ENCODE measurements at regions of chr17 and their contacts with region 1.

Region 1: DNA sequence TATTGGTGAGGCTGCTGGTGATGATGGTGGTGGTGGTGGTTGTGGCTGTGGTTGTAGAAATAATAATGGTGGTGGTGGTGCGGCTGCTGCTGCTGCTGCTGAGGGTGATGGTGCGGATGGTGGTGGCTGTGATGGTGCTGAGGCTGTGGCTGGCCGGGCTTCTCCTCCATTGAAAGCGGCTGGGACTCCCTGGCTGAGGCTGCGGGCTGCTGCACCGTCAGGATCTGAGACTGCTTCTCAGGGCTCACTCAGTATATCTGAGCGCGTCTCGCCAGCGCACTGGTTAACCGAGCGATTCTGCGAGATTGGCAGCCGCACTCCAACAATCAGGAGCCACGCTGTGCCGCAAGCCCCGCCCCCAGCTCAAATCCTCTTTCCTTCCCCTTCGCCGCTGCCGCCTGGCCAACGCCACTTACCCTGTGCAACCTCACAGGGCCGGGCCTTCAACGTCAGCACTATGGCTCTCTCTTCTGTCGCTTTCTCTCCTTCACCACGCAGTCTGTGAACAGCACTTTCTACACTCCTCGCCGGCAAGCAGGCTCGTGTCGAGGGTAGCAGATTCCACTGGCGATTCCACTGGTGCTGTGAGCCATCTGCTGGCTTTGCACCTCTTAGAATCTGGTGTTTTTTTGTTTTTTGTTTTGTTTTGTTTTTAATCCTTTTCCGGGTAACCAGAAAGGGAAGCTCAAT is at the start of gene NUFIP2:
- DNase-seq: peak; percentile 98 to 99 (median 99)
- ATAC-seq: peak; percentile 94
- H3K4me3 ChIP-seq: peak within 1 kb of the TSS; percentile 92 to 94
- H3K27ac ChIP-seq: peak within 1 kb of the TSS; percentile 96 to 99
- H3K4me1 ChIP-seq: peaks cover 21 to 39% of the 10 kb centered on the region in 2 donors
- H3K27me3 ChIP-seq: no peaks in the 10 kb centered on the region
- CTCF ChIP-seq: no peak
- polyA plus RNA-seq, gene NUFIP2: 34.5 to 42.0 (median 38.1) TPM

Region 2: GRCh38 chr17:29148790-29149430 is 145.1 kb before region 1 on chr17:
- intact Hi-C with region 1: loop called in 1 of 2 experiments (anchors 5 kb)
- DNase-seq: peak; percentile 92 to 99 (median 96)
- ATAC-seq: peak; percentile 97
- H3K4me3 ChIP-seq: peak overlapping the region; percentile 35 to 37
- H3K27ac ChIP-seq: peak overlapping the region; percentile 81 to 87
- H3K4me1 ChIP-seq: peaks cover 11 to 57% of the 10 kb centered on the region in 2 donors
- H3K27me3 ChIP-seq: no peaks in the 10 kb centered on the region
- CTCF ChIP-seq: peak; percentile 95 to 100

Region 3: DNA sequence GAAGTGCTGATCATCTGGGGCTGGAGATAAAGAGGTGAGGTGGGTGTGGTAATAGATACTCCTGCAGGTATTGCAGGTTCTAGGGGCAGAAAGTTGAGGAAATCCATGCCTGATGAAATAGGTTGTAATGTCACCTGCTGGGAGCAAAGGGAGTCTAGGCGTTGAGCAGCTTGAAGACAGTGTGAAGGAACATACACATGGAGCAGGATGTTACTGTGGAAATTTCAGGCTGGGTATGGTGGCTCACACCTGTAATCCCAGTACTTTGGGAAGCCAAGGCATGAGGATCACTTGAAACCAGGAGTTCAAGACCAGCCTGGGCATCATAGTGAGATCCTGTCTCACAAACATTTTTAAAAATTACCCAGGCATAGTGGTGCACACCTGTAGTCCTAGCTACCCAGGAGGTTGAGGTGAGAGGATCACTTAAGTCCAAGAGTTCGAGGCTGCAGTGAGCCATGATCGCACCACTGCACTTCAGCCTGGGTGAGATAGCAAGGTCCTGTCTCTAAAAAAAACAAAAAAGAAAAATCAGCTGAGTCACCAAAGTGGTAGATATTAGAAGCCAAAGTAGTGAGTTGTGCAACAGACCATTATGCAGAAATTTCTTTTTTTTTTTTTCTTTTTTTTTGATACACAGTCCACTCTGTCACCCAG is 56.4 kb before region 1 on chr17:
- intact Hi-C with region 1: loop called in 1 of 2 experiments (anchors 10 kb)
- DNase-seq: no peak
- ATAC-seq: peak; percentile 35
- H3K4me3 ChIP-seq: no peak overlapping the region
- H3K27ac ChIP-seq: no peak overlapping the region
- H3K4me1 ChIP-seq: peaks cover 3 to 32% of the 10 kb centered on the region in 2 donors
- H3K27me3 ChIP-seq: no peaks in the 10 kb centered on the region
- CTCF ChIP-seq: no peak

Measured in left lung (tissue), 14 donors.